ENCODE measurements at regions of chr15 and their contacts with region 1.

Region 1: DNA sequence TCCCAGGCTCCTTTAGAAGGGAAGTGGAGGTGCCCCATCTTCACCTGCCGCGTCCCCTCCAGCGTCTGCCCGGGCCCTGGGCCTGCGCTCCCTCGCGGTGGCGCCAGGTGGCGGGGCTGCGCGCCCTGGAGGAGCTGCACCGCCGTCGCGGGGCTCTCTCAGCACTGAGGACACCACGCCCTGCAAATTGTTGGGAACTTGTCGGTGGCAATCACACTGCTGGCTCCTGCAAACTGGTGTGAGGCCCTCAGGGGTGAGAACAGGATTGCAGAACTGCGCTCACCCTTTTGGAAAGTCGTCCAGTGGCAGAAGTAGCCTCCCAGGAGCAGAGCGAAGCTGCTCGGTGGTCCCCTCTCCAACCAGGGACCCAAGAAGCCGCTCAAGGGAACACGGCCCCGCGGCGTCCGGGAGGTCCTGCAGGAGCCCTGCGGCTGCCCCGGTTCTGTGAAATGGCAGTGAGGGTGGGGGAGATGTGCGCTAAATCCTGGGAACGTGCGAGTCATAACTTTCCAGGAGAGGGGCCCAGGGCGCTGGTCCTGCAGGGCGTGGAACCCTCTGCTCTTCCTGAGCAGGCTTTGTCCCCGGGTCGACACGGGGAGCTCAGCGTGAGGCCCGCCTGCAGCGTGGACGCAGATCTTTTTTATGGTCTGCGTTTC is 995 bp upstream of the LRRK1 start:
- DNase-seq: peak; percentile 88 to 91
- ATAC-seq: peak; percentile 93
- H3K4me3 ChIP-seq: peak overlapping the region; percentile 85 to 89
- H3K27ac ChIP-seq: no peak overlapping the region
- H3K4me1 ChIP-seq: no peaks in the 10 kb centered on the region
- H3K27me3 ChIP-seq: no peaks in the 10 kb centered on the region

Region 2: DNA sequence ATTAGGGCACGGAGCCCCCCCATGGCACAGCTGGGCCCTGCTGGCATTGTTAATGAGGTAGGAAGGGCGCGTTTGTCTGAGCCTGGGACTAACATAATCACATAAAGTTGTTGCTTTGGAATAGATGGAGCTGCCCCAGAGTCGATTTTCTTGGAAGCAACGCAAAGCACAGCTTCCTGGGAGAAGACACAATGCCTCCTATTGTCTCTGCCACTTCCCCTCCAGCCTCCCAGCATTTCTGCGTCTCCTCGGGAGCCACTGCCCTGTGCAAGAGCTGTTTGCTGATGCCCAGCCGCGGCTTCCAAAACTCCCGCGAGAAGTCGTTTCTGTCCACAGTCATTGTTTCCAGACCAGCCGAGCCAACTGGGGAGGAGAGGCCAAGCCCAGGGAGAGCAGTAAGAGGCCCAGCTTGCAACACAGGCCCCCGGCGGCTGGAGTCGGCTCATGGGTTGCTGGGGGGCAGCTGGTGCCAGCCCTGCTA is 56.6 kb before region 1 on chr15:
- intact Hi-C with region 1: no loop called
- DNase-seq: peak in 1 of 2 donors; percentile 75
- ATAC-seq: no peak
- H3K4me3 ChIP-seq: no peak overlapping the region
- H3K27ac ChIP-seq: no peak overlapping the region
- H3K4me1 ChIP-seq: no peaks in the 10 kb centered on the region
- H3K27me3 ChIP-seq: no peaks in the 10 kb centered on the region

Region 3: GRCh38 chr15:100873029-100873677 is 45.0 kb before region 1 on chr15:
- intact Hi-C with region 1: no loop called
- DNase-seq: peak in 1 of 2 donors; percentile 56
- ATAC-seq: peak; percentile 86
- H3K4me3 ChIP-seq: no peak overlapping the region
- H3K27ac ChIP-seq: no peak overlapping the region
- H3K4me1 ChIP-seq: no peaks in the 10 kb centered on the region
- H3K27me3 ChIP-seq: no peaks in the 10 kb centered on the region

Region 4: DNA sequence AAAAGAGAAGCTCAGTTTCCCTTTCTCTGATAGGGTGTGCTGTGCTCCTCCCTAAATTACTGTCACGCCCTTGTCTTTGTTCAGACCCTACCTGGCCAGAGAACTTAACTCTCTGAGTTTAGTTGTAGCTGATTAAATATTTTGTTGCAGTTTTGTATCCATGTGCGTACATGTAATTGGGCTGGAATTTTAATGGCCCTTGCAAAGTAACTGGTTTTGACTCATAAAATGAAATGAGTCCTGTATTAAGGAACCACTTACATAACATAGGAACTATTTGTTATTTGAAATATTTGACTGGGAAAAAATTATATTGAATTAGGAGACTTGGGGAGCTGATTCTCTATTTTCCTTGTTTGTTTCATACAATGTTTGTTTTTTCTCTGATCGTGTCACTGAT is 81.2 kb after region 1 on chr15:
- intact Hi-C with region 1: loop called in 1 of 2 experiments (anchors 2 kb)
- DNase-seq: no peak
- ATAC-seq: no peak
- H3K4me3 ChIP-seq: no peak overlapping the region
- H3K27ac ChIP-seq: no peak overlapping the region
- H3K4me1 ChIP-seq: no peaks in the 10 kb centered on the region
- H3K27me3 ChIP-seq: no peaks in the 10 kb centered on the region

Region 5: GRCh38 chr15:101008158-101009139 is 90.3 kb after region 1 on chr15:
- intact Hi-C with region 1: loop called (anchors 1 to 2 kb)
- DNase-seq: peak; percentile 87 to 94
- ATAC-seq: peak; percentile 91
- H3K4me3 ChIP-seq: peak overlapping the region in 1 of 2 donors; percentile 40
- H3K27ac ChIP-seq: no peak overlapping the region
- H3K4me1 ChIP-seq: no peaks in the 10 kb centered on the region
- H3K27me3 ChIP-seq: no peaks in the 10 kb centered on the region

Region 6: DNA sequence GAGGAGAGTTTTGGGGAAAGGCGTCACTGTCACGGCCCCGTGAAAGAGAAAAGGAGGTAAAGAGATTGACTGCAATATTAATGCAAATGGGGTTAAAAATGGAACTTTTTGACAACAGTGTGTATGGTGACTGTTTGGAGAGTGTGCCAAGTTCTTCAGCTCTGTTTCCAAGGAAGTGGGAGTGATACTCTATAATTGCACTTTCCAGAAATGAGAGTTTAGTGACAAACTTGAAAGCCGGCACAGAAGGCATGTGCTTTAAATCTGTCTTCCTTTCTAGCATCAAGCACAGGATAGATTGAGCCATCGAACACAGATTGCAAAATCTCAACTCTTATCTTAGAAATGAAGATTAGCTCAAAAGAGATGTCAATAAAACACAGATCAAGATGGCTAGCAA is 428.8 kb after region 1 on chr15:
- intact Hi-C with region 1: no loop called
- DNase-seq: no peak
- ATAC-seq: no peak
- H3K4me3 ChIP-seq: no peak overlapping the region
- H3K27ac ChIP-seq: no peak overlapping the region
- H3K4me1 ChIP-seq: no peaks in the 10 kb centered on the region
- H3K27me3 ChIP-seq: no peaks in the 10 kb centered on the region